H1 (cell line): ENCODE measurements at regions of chr22 and their contacts with region 1.

Region 1: GRCh38 chr22:30289134-30289979 is at the start of gene CASTOR1:
- DNase-seq: peak; percentile 91 to 98
- H3K4me3 ChIP-seq: peak within 1 kb of the TSS; percentile 58 to 74 (median 70)
- H3K27ac ChIP-seq: no peak within 1 kb of the TSS
- H3K4me1 ChIP-seq: peaks cover 0 to 19% (median 14%) of the 10 kb centered on the region in 4 experiments; a peak in 6 of 7 replicates
- H3K27me3 ChIP-seq: no peaks in the 10 kb centered on the region
- CTCF ChIP-seq: no peak
- EP300 ChIP-seq: no peak; a peak in 1 of 3 replicates
- POLR2A ChIP-seq: peak in 1 of 2 experiments; percentile 45; a peak in 1 of 3 replicates
- RAD21 ChIP-seq: no peak
- total RNA-seq, gene CASTOR1: 8.4 and 10.3 TPM in 2 replicates

Region 2: GRCh38 chr22:30104501-30105156 is 184.7 kb before region 1 on chr22:
- CTCF ChIA-PET with region 1: interaction called, 17 read pairs
- POLR2A ChIA-PET with region 1: interaction called, 3 read pairs
- DNase-seq: no peak
- H3K4me3 ChIP-seq: no peak overlapping the region
- H3K27ac ChIP-seq: no peak overlapping the region
- H3K4me1 ChIP-seq: no peaks in the 10 kb centered on the region
- H3K27me3 ChIP-seq: no peaks in the 10 kb centered on the region
- CTCF ChIP-seq: no peak
- EP300 ChIP-seq: no peak
- POLR2A ChIP-seq: no peak
- RAD21 ChIP-seq: no peak

Region 3: DNA sequence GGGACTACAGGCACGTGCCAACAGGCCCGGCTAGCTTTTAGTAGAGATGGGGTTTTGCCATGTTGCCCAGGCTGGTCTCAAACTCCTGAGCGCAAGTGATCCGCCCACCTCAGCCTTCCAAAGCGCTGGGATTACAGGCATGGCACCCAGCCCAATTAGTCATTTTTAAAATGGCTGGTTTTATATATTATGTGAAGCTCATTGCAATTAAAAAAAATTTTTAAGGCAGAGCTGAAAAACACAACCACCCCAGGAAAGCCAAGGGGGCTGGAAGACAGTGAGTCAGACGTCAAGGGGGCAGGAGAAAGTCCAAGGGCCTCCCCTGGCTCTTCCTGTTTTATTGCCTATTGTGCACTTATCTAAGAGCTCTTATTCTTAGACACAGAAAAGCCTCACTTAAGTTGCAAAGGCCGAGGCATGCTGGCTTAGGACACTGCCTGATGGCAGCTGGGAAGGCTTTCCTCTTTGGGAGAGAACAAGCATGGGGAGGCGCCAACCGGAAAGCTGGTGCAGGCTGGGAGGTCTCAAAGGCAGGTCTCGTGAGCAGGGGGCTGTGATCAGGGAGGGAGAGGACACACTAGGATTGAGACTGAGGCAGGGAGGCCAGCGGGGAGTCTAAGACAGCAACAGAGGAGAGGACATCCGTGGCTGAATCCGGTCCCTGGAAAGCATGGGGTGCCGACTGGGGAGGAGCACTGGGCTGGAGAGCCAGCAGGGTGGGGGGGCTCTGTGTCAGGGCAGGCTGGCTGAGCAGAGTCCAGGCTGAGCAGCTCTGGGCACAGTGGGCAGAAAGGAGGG is 11.6 kb before region 1 on chr22:
- CTCF ChIA-PET with region 1: interaction called, 35 read pairs
- POLR2A ChIA-PET with region 1: interaction called, 4 read pairs
- DNase-seq: no peak
- H3K4me3 ChIP-seq: no peak overlapping the region
- H3K27ac ChIP-seq: no peak overlapping the region
- H3K4me1 ChIP-seq: peaks cover 0 to 10% (median 3%) of the 10 kb centered on the region in 4 experiments; a peak in 3 of 7 replicates
- H3K27me3 ChIP-seq: no peaks in the 10 kb centered on the region; a peak in 1 of 7 replicates
- CTCF ChIP-seq: no peak
- EP300 ChIP-seq: no peak
- POLR2A ChIP-seq: no peak
- RAD21 ChIP-seq: no peak

Region 4: DNA sequence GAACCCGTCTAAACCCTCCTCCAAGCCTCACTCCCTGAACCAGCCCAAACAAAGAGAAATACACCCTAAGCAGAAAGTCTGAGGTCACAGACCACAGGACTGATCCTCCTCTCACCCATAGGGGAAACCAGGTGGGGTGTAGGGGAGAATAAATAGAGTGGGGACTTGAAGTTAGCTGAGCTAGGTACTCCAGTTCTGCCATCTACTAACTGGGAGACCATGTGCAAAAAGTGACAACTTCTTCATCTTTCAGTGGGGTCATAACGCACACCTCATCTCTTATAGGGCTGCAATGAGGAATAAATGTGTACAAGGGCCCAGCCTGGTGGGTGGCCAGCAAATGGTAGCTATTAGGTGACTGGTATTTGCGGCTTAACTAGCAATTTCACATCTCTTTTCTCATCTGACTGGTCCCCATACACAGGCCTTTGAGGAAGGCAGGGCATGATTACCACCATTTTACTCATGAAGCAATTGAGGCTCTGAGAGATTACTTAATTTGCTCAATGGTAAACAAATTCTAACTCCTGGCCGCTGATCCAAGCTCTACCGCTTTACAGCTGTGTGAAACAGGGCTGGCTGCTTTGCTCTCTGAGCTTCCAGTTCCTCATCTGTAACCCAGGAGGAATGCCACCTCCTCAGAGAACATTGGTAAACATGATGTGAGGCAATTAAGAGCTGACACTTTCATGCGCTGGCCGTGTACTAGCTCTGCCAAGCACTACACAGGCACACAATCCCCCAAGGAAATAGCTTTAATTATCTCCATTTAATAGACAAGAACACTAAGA is 20.8 kb after region 1 on chr22:
- CTCF ChIA-PET with region 1: interaction called, 203 read pairs
- POLR2A ChIA-PET with region 1: interaction called, 3 read pairs
- DNase-seq: no peak
- H3K4me3 ChIP-seq: no peak overlapping the region
- H3K27ac ChIP-seq: no peak overlapping the region
- H3K4me1 ChIP-seq: peaks cover 0 to 5% (median 1%) of the 10 kb centered on the region in 4 experiments; a peak in 3 of 7 replicates
- H3K27me3 ChIP-seq: no peaks in the 10 kb centered on the region
- CTCF ChIP-seq: no peak
- EP300 ChIP-seq: no peak
- POLR2A ChIP-seq: no peak
- RAD21 ChIP-seq: no peak

Region 5: GRCh38 chr22:30340911-30341685 is 51.7 kb after region 1 on chr22:
- CTCF ChIA-PET with region 1: interaction called, 27 read pairs
- POLR2A ChIA-PET with region 1: interaction called, 3 read pairs
- DNase-seq: no peak
- H3K4me3 ChIP-seq: no peak overlapping the region
- H3K27ac ChIP-seq: no peak overlapping the region
- H3K4me1 ChIP-seq: no peaks in the 10 kb centered on the region
- H3K27me3 ChIP-seq: no peaks in the 10 kb centered on the region
- CTCF ChIP-seq: no peak
- EP300 ChIP-seq: no peak
- POLR2A ChIP-seq: no peak
- RAD21 ChIP-seq: no peak

Region 6: DNA sequence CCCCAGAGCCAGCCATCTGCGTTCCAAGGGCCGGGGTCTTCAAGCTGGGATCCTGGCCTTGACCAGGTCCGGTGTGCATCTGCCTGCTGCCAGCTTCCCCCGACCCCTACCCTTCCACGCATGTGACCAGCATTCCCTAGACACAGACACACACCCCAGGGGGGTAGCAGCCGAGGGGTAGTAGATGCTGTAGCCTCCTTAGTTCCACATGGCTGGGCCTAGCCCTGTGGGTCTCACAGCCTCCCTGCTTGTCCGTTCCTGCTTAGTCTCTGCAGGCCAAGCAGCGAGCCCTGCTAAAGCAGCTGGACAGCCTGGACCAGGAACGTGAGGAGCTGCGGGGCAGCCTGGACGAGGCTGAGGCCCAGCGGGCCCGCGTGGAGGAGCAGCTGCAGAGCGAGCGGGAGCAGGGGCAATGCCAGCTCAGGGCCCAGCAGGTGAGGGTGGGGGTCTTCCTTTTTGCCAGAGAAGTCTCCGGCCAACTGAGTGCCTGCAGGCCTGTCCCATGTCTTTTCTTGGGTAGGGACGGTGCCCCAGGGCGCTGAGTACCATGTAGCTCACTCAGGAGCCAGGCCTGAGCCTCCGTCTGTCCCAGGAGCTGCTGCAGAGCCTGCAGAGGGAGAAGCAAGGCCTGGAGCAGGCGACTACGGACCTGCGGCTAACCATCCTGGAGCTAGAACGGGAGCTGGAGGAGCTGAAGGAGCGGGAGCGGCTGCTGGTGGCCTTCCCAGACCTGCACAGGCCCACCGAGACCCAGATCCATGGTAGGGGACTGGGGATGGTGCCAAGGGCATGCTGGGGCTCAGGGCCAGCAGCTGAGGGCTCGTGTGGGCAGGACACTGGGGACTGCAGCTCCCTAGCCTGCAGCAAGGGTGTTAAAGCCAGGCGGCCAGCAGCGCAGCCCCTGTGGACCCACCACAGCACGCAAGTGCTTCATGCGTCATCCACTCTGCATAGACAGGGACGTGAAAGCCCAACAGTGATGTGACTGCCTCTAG is 84.3 kb after region 1 on chr22:
- CTCF ChIA-PET with region 1: interaction called, 26 read pairs
- POLR2A ChIA-PET with region 1: no interaction called
- DNase-seq: no peak
- H3K4me3 ChIP-seq: no peak overlapping the region
- H3K27ac ChIP-seq: peak overlapping the region; percentile 61; the same call in 1 of the 2 replicates
- H3K4me1 ChIP-seq: peaks cover 0 to 2% (median 0%) of the 10 kb centered on the region in 4 experiments; a peak in 1 of 7 replicates
- H3K27me3 ChIP-seq: no peaks in the 10 kb centered on the region; a peak in 1 of 7 replicates
- CTCF ChIP-seq: no peak
- EP300 ChIP-seq: no peak
- POLR2A ChIP-seq: no peak
- RAD21 ChIP-seq: no peak

Region 7: DNA sequence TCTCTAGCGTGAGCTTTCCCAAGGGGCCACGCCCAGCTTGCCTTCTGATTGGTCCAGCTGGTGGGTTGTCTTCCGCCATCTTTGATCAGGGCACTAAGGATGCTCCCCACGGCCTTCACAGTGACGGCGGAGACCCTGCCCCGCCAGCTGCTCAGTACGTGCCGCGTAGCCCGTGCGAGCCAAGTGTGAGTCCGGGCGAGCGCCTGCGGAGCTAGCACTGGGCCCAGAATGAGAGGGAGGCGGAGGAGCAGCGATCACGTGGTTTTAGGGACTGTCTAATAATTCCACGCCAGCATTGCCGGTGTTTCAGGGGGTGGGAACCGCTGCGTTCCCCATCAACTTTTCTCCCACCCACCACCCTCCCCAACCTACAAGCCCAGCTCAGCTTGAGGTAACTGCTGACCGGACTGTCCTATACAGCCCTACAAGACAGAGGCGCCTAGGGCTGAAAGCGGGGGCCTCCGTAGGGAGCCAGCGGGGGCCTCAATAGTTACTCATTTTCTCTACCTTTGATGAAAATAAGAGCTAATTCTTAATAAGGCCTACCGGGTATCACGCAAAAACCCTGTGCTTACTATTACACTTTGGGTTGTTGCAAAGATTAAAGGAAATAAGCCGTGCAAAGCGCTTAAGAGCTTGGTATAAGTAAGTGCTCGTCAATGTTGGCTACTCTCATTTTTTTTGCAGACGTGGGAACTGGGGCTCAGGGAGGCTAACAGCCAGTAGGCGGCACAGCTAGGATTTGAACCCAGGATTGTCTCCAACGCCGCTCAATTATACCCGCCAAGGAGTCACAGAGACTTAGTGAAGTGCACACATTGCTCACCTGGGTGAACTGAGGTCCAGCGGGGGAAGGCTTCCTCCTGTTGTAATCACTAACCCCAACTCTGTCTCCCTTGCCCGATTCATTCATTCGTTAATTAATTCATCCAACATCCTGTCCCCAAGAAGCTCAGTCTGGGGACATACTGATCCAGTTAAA is 134.9 kb after region 1 on chr22:
- CTCF ChIA-PET with region 1: interaction called, 14 read pairs
- POLR2A ChIA-PET with region 1: interaction called, 6 read pairs
- DNase-seq: peak; percentile 94 to 99
- H3K4me3 ChIP-seq: peak overlapping the region; percentile 70 to 88 (median 74)
- H3K27ac ChIP-seq: no peak overlapping the region
- H3K4me1 ChIP-seq: peaks cover 3 to 21% (median 13%) of the 10 kb centered on the region in 4 experiments
- H3K27me3 ChIP-seq: no peaks in the 10 kb centered on the region
- CTCF ChIP-seq: peak in 1 of 3 experiments; percentile 20; a peak in 2 of 4 replicates
- EP300 ChIP-seq: peak in 1 of 2 experiments; percentile 76; a peak in 1 of 3 replicates
- POLR2A ChIP-seq: peak; percentile 46 to 81
- RAD21 ChIP-seq: no peak

Region 8: GRCh38 chr22:30453731-30454510 is 164.6 kb after region 1 on chr22:
- CTCF ChIA-PET with region 1: no interaction called
- POLR2A ChIA-PET with region 1: no interaction called
- DNase-seq: no peak
- H3K4me3 ChIP-seq: no peak overlapping the region
- H3K27ac ChIP-seq: no peak overlapping the region
- H3K4me1 ChIP-seq: no peaks in the 10 kb centered on the region
- H3K27me3 ChIP-seq: no peaks in the 10 kb centered on the region
- CTCF ChIP-seq: peak; percentile 26 to 48 (median 37)
- EP300 ChIP-seq: no peak
- POLR2A ChIP-seq: no peak
- RAD21 ChIP-seq: peak; percentile 57 to 71

Region 9: DNA sequence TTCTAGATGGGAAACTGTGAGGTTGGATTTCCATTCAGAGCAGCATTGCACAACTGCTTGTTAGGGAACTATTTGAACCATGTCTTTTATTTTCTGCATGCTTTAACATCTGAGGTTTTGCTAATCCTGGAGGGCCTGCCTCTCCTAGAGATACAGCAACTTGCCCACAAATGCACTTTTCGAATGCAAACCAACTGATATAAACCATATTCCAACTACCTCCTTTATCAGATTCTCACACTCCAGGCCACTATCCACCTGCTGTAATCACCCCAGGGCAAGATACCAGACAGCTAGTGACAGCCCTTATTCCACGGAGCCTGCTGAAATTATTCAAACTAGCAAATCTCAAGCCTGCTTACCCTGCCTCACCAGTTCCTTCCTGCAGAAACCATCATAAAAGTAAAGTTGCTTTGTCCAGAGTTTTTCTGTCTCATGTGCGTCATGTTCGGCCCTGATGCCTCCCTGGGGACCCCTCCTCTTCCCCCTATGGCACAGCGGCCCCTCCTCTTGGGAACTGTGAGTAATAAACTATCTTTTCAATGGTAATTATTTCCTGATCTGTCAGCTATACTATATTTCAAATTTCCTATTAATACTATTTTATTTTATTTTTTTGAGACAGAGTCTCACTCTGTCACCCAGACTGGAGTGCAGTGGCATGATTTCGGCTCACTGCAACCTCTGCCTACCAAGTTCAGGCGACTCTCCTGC is 234.6 kb after region 1 on chr22:
- CTCF ChIA-PET with region 1: no interaction called
- POLR2A ChIA-PET with region 1: no interaction called
- DNase-seq: no peak
- H3K4me3 ChIP-seq: no peak overlapping the region
- H3K27ac ChIP-seq: no peak overlapping the region
- H3K4me1 ChIP-seq: no peaks in the 10 kb centered on the region
- H3K27me3 ChIP-seq: no peaks in the 10 kb centered on the region; a peak in 1 of 7 replicates
- CTCF ChIP-seq: no peak
- EP300 ChIP-seq: no peak
- POLR2A ChIP-seq: no peak
- RAD21 ChIP-seq: no peak